ENCODE measurements at regions of chr3 and their contacts with region 1.

Region 1: GRCh38 chr3:115092220-115092791 is 54.8 kb downstream of the ZBTB20 start:
- DNase-seq: peak; percentile 50
- H3K4me3 Mint-ChIP-seq: no peak overlapping the region
- H3K27ac Mint-ChIP-seq: no peak overlapping the region
- H3K4me1 Mint-ChIP-seq: peaks cover 1% of the 10 kb centered on the region
- H3K27me3 Mint-ChIP-seq: no peaks in the 10 kb centered on the region
- CTCF ChIP-seq: peak; percentile 44

Region 2: DNA sequence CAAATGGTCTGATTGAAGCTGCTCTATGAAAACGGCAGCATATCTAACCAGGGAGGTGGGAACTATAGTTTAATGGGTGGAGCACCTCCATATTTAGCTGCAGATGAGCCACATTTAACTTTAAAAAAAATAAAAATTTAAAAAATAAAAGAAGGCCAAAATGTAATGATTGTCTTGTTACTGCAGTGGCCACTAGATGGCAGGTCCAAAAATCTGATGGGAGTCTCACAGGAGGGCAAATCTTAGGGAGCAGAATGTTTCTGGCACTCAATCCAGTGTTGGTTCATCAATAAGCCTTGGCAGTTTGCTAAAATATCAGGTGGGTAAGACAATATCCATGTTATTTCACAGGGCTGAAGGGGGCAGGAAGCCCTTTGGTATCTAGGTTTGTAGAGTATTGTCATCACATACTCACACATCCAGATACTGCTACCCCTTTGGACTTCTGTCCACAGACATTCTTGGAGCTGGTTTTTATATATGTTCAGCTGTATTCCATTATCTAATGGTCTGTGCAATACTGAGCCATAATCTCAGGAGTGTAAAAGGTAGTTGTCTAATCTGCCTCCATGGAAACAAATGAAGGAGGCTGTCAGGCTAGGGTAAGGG is 565.2 kb before region 1 on chr3:
- CTCF ChIA-PET with region 1: interaction called, 3 read pairs
- POLR2A ChIA-PET with region 1: no interaction called
- intact Hi-C with region 1: loop called (anchors 5 kb)
- DNase-seq: peak; percentile 30
- H3K4me3 Mint-ChIP-seq: no peak overlapping the region
- H3K27ac Mint-ChIP-seq: no peak overlapping the region
- H3K4me1 Mint-ChIP-seq: no peaks in the 10 kb centered on the region
- H3K27me3 Mint-ChIP-seq: no peaks in the 10 kb centered on the region
- CTCF ChIP-seq: peak; percentile 41

Region 3: DNA sequence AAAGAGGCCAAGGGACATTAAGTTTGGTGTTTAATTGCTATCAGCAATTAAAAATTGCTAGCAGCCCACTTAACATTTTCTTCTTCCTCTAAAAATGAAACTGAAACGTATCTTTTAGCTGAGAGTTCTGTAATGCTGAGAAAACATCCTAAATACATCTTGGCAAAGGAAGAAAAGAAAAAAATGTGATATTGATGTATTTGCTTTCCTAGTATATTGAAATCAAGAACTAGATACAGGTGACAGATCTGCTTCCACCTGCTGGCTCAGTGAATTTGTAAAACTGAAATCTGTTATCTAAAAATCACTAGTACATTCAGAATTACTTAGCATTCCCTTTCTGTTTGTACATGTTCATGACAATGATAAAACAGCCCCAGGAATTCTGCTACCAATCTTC is 228.5 kb before region 1 on chr3:
- CTCF ChIA-PET with region 1: no interaction called
- POLR2A ChIA-PET with region 1: no interaction called
- intact Hi-C with region 1: no loop called
- DNase-seq: no peak
- H3K4me3 Mint-ChIP-seq: no peak overlapping the region
- H3K27ac Mint-ChIP-seq: no peak overlapping the region
- H3K4me1 Mint-ChIP-seq: peaks cover 6% of the 10 kb centered on the region
- H3K27me3 Mint-ChIP-seq: no peaks in the 10 kb centered on the region
- CTCF ChIP-seq: no peak

Region 4: GRCh38 chr3:115040673-115041286 is 51.5 kb before region 1 on chr3:
- CTCF ChIA-PET with region 1: interaction called, 21 read pairs
- POLR2A ChIA-PET with region 1: interaction called, 4 read pairs
- intact Hi-C with region 1: loop called (anchors 1 kb)
- DNase-seq: peak; percentile 51
- H3K4me3 Mint-ChIP-seq: no peak overlapping the region
- H3K27ac Mint-ChIP-seq: no peak overlapping the region
- H3K4me1 Mint-ChIP-seq: no peaks in the 10 kb centered on the region
- H3K27me3 Mint-ChIP-seq: no peaks in the 10 kb centered on the region
- CTCF ChIP-seq: peak; percentile 51

Region 5: DNA sequence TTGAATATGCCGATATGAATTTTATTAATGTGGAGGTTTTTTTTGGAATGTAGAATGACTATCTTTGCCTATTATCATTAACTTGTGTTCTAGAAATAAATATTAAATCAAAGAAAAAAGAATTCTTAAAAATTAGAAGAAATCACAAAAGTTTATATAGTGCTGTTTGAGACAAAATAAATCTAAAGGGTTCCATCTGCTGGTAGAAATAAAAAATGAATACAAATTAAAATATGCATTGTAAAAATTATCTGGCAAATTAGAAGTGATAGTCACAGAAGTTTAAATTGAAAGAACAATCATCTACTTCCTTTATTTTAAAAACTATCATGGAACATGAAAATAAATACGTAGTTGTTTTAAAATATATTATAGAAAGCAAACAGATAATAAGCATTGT is 77.5 kb after region 1 on chr3:
- CTCF ChIA-PET with region 1: interaction called, 70 read pairs
- POLR2A ChIA-PET with region 1: interaction called, 3 read pairs
- intact Hi-C with region 1: loop called (anchors 1 kb)
- DNase-seq: no peak
- H3K4me3 Mint-ChIP-seq: no peak overlapping the region
- H3K27ac Mint-ChIP-seq: no peak overlapping the region
- H3K4me1 Mint-ChIP-seq: no peaks in the 10 kb centered on the region
- H3K27me3 Mint-ChIP-seq: no peaks in the 10 kb centered on the region
- CTCF ChIP-seq: peak; percentile 30

Region 6: DNA sequence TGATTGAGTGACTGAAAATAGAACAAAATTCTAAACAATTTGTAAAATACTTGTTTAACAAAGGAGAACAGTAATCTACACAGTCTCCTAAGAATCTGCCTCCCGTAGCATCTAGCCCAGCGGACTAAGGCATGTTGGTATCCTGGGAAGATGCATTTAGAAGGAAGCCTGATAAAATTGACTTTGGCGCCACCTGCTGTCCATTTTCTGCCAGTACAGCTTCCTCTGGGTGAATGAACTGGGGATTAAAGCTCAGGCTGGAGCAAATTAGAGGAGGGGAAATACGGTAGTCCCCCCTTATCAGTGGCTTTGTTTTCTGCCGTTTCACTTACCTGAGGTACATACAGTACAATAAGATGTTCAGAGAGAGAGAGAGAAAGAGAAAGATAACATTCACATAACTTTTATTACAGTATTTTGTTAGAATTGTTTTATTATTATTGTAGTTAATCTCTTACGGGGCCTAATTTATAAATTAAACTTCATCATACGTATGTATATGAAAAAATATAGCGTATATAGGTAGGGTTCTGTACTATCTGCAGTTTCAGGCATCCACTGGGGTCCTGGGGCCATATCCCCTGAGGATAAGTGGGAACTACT is 722.6 kb after region 1 on chr3:
- CTCF ChIA-PET with region 1: interaction called, 3 read pairs
- POLR2A ChIA-PET with region 1: no interaction called
- intact Hi-C with region 1: loop called (anchors 2 kb)
- DNase-seq: peak; percentile 85
- H3K4me3 Mint-ChIP-seq: no peak overlapping the region
- H3K27ac Mint-ChIP-seq: no peak overlapping the region
- H3K4me1 Mint-ChIP-seq: no peaks in the 10 kb centered on the region
- H3K27me3 Mint-ChIP-seq: no peaks in the 10 kb centered on the region
- CTCF ChIP-seq: peak; percentile 81